ENCODE measurements at regions of chr17 and their contacts with region 1.

Region 1: GRCh38 chr17:22278302-22279275 is 586.3 kb downstream of the KCNJ18 start:
- DNase-seq: no peak
- ATAC-seq: no peak
- H3K4me3 ChIP-seq: no peak overlapping the region
- H3K27ac ChIP-seq: no peak overlapping the region
- H3K4me1 ChIP-seq: no peaks in the 10 kb centered on the region
- H3K27me3 ChIP-seq: no peaks in the 10 kb centered on the region
- CTCF ChIP-seq: no peak
- EP300 ChIP-seq: no peak
- POLR2A ChIP-seq: no peak
- RAD21 ChIP-seq: no peak

Region 2: GRCh38 chr17:22158364-22158763 is 120.2 kb before region 1 on chr17:
- CTCF ChIA-PET with region 1: no interaction called
- POLR2A ChIA-PET with region 1: no interaction called
- RAD21 ChIA-PET with region 1: no interaction called
- SMC1A ChIA-PET with region 1: no interaction called
- in situ Hi-C with region 1: loop called (anchors 10 kb)
- intact Hi-C with region 1: no loop called
- DNase-seq: no peak
- ATAC-seq: no peak
- H3K4me3 ChIP-seq: no peak overlapping the region
- H3K27ac ChIP-seq: no peak overlapping the region
- H3K4me1 ChIP-seq: no peaks in the 10 kb centered on the region
- H3K27me3 ChIP-seq: no peaks in the 10 kb centered on the region
- CTCF ChIP-seq: no peak
- EP300 ChIP-seq: no peak
- POLR2A ChIP-seq: no peak
- RAD21 ChIP-seq: no peak

Region 3: GRCh38 chr17:22221344-22221743 is 57.2 kb before region 1 on chr17:
- CTCF ChIA-PET with region 1: no interaction called
- POLR2A ChIA-PET with region 1: no interaction called
- RAD21 ChIA-PET with region 1: no interaction called
- SMC1A ChIA-PET with region 1: no interaction called
- in situ Hi-C with region 1: loop called (anchors 10 kb)
- intact Hi-C with region 1: no loop called
- DNase-seq: no peak
- ATAC-seq: no peak
- H3K4me3 ChIP-seq: no peak overlapping the region
- H3K27ac ChIP-seq: no peak overlapping the region
- H3K4me1 ChIP-seq: no peaks in the 10 kb centered on the region
- H3K27me3 ChIP-seq: no peaks in the 10 kb centered on the region
- CTCF ChIP-seq: no peak
- EP300 ChIP-seq: no peak
- POLR2A ChIP-seq: no peak
- RAD21 ChIP-seq: no peak

Region 4: GRCh38 chr17:22310717-22311686 is 32.4 kb after region 1 on chr17:
- CTCF ChIA-PET with region 1: no interaction called
- POLR2A ChIA-PET with region 1: no interaction called
- RAD21 ChIA-PET with region 1: no interaction called
- SMC1A ChIA-PET with region 1: no interaction called
- in situ Hi-C with region 1: no loop called
- intact Hi-C with region 1: no loop called
- DNase-seq: no peak
- ATAC-seq: no peak
- H3K4me3 ChIP-seq: no peak overlapping the region
- H3K27ac ChIP-seq: no peak overlapping the region
- H3K4me1 ChIP-seq: no peaks in the 10 kb centered on the region
- H3K27me3 ChIP-seq: no peaks in the 10 kb centered on the region
- CTCF ChIP-seq: no peak
- EP300 ChIP-seq: no peak
- POLR2A ChIP-seq: no peak
- RAD21 ChIP-seq: no peak